Uterus (tissue), 4 donors: ENCODE measurements at regions of chr12 and their contacts with region 1.

Region 1: DNA sequence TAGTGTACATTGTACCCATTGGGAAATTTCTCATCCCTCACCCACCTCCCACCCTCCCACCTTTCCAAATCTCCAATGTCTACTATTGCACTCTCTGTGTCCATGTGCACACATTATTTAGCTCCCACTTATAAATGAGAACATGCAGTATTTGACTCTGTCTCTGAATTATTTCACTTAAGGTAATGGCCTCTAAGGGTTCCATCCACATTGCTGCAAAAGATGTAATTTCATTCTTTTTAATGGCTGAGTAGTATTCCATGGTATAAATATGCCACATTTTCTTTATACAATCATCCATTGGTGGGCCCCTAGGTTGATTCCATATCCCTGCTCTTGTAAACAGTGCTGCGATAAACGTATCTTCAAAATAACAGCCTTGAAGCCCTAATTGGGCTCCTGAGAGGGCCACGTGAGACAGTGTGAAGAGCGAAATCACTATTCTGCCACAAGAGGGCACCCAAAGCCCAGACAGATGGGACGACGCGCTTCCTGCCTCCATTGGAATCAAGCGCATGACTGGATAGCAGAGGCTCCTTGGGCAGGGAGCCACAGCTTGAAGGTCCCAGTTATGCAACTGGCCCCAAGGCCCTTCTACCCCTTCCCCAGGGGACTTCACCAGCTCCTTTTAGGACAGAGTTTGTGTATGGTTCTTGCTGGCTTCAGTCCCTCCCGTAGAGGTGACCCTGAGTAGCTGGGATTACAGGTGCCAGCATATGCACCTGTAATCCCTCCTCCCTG is 21.3 kb upstream of the CD27 start:
- DNase-seq: peak; percentile 85 to 89
- H3K4me3 ChIP-seq: no peak overlapping the region
- H3K27ac ChIP-seq: peak overlapping the region in 1 of 2 donors; percentile 25
- H3K4me1 ChIP-seq: no peaks in the 10 kb centered on the region
- H3K27me3 ChIP-seq: no peaks in the 10 kb centered on the region
- CTCF ChIP-seq: peak; percentile 90 to 96 (median 95)
- POLR2A ChIP-seq: no peak

Region 2: GRCh38 chr12:6241495-6241894 is 181.9 kb before region 1 on chr12:
- intact Hi-C with region 1: no loop called
- DNase-seq: peak in 1 of 2 donors; percentile 55
- H3K4me3 ChIP-seq: no peak overlapping the region
- H3K27ac ChIP-seq: no peak overlapping the region
- H3K4me1 ChIP-seq: no peaks in the 10 kb centered on the region
- H3K27me3 ChIP-seq: no peaks in the 10 kb centered on the region
- CTCF ChIP-seq: no peak
- POLR2A ChIP-seq: no peak

Region 3: DNA sequence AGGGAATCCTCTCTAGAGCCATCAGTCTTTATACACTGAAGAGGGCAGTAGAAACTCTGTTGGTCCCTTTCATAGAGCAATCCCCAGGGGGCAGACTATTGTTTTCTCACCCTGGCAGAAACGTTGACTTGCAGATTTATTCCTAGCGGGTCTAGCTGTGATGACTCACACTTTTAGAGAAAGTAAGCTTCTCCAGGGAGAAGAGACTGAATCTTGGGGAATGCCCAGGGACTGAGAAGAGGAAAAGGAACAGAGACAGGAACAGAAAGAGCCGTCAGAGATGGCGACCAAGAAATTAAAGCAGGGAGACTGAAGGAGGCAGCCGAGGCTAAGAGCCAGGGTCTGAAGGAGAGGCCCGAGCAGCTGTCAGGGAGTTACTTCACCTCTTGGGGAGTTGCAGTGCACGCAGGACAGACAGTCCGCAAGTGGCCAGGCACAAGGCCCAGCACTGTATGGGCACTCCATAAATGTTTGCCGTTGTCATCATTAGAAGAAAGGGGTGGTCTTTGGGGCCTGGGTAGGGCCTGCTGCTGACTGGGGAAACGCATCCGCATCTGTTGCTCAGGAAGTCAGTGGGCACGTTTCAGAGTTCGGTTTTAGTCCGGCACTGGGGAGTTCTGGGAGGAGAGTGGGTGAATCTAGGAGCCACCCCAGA is 100.0 kb before region 1 on chr12:
- intact Hi-C with region 1: no loop called
- DNase-seq: peak; percentile 62 to 81
- H3K4me3 ChIP-seq: peak overlapping the region in 1 of 2 donors; percentile 9
- H3K27ac ChIP-seq: peak overlapping the region; percentile 83 to 85
- H3K4me1 ChIP-seq: peaks cover 0 to 7% of the 10 kb centered on the region in 2 donors
- H3K27me3 ChIP-seq: no peaks in the 10 kb centered on the region
- CTCF ChIP-seq: peak; percentile 47 to 74 (median 56)
- POLR2A ChIP-seq: no peak

Region 4: GRCh38 chr12:6465467-6466183 is 42.2 kb after region 1 on chr12:
- intact Hi-C with region 1: loop called (anchors 5 kb)
- DNase-seq: peak; percentile 38 to 76
- H3K4me3 ChIP-seq: no peak overlapping the region
- H3K27ac ChIP-seq: peak overlapping the region; percentile 10 to 31
- H3K4me1 ChIP-seq: no peaks in the 10 kb centered on the region
- H3K27me3 ChIP-seq: no peaks in the 10 kb centered on the region
- CTCF ChIP-seq: peak; percentile 79 to 96 (median 90)
- POLR2A ChIP-seq: no peak

Region 5: GRCh38 chr12:6533923-6534694 is 110.7 kb after region 1 on chr12 and contains the start of gene GAPDH:
- intact Hi-C with region 1: loop called (anchors 5 kb)
- DNase-seq: peak; percentile 91
- H3K4me3 ChIP-seq: peak within 1 kb of the TSS; percentile 77 to 88
- H3K27ac ChIP-seq: peak within 1 kb of the TSS; percentile 90 to 94
- H3K4me1 ChIP-seq: peaks cover 0 to 19% of the 10 kb centered on the region in 2 donors
- H3K27me3 ChIP-seq: no peaks in the 10 kb centered on the region
- CTCF ChIP-seq: peak in 1 of 4 experiments; percentile 20
- POLR2A ChIP-seq: peak; percentile 35 to 90
- total RNA-seq, gene GAPDH: 962 to 1,122 (median 1,020) TPM